ENCODE measurements at regions of chr13 and their contacts with region 1.

Region 1: GRCh38 chr13:107907065-107907805 is 308.1 kb downstream of the LIG4 start:
- DNase-seq: no peak
- H3K4me3 ChIP-seq: no peak overlapping the region
- H3K27ac ChIP-seq: no peak overlapping the region
- H3K4me1 ChIP-seq: no peaks in the 10 kb centered on the region
- H3K27me3 ChIP-seq: no peaks in the 10 kb centered on the region
- CTCF ChIP-seq: no peak

Region 2: DNA sequence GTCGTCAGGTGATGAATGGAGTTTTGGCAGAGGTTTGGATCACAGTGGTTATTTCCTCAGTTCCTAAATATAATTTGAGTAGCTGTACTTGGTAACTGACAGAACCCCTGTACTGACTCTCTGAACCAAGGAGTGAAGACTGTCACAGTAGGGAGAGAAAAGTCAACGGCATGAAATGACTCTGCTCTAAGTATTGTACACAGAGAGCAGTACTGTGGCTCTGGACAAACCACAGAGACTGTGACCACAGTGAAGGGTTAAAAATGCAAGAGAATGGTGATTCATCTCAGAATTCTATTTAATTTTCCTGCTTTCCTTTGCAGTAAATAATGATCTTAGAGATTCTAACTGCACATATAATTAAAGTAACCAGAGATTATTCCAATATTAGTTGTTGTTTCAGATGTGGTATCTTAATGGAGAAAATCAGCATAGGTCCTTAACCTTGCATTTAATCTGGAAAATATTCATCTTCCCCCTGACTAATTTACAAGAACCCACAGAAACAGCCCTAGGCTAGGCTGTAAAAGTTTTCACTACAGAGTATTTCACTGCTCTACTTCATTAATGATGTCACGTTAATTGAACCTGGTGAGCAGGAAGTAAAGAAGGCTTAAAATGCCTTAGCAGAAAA is 86.1 kb after region 1 on chr13:
- CTCF ChIA-PET with region 1: interaction called, 11 read pairs
- POLR2A ChIA-PET with region 1: no interaction called
- intact Hi-C with region 1: no loop called
- DNase-seq: no peak
- H3K4me3 ChIP-seq: no peak overlapping the region
- H3K27ac ChIP-seq: no peak overlapping the region
- H3K4me1 ChIP-seq: no peaks in the 10 kb centered on the region
- H3K27me3 ChIP-seq: no peaks in the 10 kb centered on the region
- CTCF ChIP-seq: no peak